ENCODE measurements at regions of chr6 and their contacts with region 1.

Region 1: GRCh38 chr6:44265007-44265721 is at the start of gene NFKBIE:
- DNase-seq: peak; percentile 84 to 98 (median 94)

Region 2: GRCh38 chr6:43916924-43917877 is 348.0 kb before region 1 on chr6:
- intact Hi-C with region 1: no loop called
- DNase-seq: no peak

Region 3: GRCh38 chr6:44312901-44313788 is 48.0 kb after region 1 on chr6 and contains the start of gene AARS2:
- intact Hi-C with region 1: loop called (anchors 5 kb)
- DNase-seq: peak; percentile 76 to 95 (median 90)

Region 4: GRCh38 chr6:44373787-44374186 is 108.6 kb after region 1 on chr6:
- intact Hi-C with region 1: no loop called
- DNase-seq: no peak

Measured in head of caudate nucleus (tissue), 42 donors.